ENCODE measurements at regions of chr5 and their contacts with region 1.

Region 1: GRCh38 chr5:65925601-65926275 is 637 bp upstream of the ERBIN start:
- DNase-seq: peak; percentile 84 to 85
- H3K4me3 ChIP-seq: peak overlapping the region; percentile 65 to 91 (median 86)
- H3K27ac ChIP-seq: peak overlapping the region; percentile 98 to 100 (median 99)
- H3K4me1 ChIP-seq: peaks cover 0 to 10% of the 10 kb centered on the region in 2 donors
- H3K27me3 ChIP-seq: no peaks in the 10 kb centered on the region
- CTCF ChIP-seq: peak in 2 of 6 experiments; percentile 37 to 42
- POLR2A ChIP-seq: peak; percentile 68 to 93

Region 2: DNA sequence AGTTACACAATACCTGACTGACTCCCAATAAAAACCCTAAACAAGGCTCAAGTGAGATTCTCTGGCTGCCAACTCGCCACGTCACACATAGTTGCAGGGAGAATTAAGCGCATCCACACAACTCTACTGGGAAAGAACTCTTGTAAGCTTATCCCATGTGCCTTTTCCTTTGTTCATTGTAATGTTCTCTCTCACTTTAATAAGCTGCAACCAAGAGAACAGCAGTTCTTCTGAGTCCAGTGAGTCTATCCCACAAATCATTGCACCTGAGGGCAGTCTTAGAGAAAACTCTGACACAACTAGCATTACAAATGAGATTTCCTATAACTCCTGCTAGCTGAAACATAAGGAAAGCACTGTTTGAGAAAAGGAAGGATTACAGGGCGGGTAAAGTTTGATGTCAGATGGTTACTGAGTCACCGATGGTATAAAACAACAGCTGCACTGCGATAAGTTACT is 390.2 kb before region 1 on chr5:
- intact Hi-C with region 1: no loop called
- DNase-seq: no peak
- H3K4me3 ChIP-seq: no peak overlapping the region
- H3K27ac ChIP-seq: no peak overlapping the region
- H3K4me1 ChIP-seq: no peaks in the 10 kb centered on the region
- H3K27me3 ChIP-seq: no peaks in the 10 kb centered on the region
- CTCF ChIP-seq: no peak
- POLR2A ChIP-seq: no peak

Region 3: DNA sequence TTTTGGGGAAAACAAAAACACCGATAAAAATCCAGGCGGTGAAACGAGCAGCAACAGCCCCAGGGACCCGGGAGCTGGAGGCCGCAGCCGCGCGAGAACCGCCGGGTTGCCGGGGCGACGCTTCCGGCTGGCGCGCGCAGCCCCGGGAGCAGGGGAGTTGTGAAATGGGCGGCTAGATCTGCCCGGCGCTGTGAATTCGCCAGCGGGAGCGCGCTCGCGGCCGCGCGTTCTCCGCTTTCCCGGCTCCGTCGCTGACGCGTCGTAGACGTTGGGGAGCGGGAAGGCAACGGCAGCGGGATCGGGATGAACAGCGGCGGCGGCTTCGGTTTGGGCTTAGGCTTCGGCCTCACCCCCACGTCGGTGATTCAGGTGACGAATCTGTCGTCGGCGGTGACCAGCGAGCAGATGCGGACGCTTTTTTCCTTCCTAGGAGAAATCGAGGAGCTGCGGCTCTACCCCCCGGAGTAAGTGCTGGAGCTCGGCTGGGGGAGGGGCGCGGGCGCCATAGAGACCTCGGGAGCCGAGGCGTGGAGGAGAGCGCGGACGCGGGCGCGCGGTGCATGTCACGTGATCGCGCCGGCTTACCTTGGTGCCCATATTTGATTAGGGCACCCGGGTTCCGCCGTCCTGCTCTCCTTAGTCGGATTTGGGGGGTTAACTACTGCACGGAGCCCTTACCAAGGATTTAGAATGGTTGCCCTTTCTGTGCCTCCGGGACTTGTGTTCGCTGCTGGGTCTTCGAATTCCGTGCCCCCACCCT is 218.5 kb after region 1 on chr5 and contains the start of gene SREK1:
- intact Hi-C with region 1: loop called (anchors 5 kb)
- DNase-seq: peak; percentile 95 to 97
- H3K4me3 ChIP-seq: peak within 1 kb of the TSS; percentile 13 to 74 (median 54)
- H3K27ac ChIP-seq: peak within 1 kb of the TSS; percentile 98 to 99 (median 99)
- H3K4me1 ChIP-seq: peaks cover 17 to 28% of the 10 kb centered on the region in 2 donors
- H3K27me3 ChIP-seq: no peaks in the 10 kb centered on the region
- CTCF ChIP-seq: peak in 1 of 6 experiments; percentile 17
- POLR2A ChIP-seq: peak; percentile 56 to 89
- total RNA-seq, gene SREK1: 124 to 236 (median 192) TPM

Region 4: DNA sequence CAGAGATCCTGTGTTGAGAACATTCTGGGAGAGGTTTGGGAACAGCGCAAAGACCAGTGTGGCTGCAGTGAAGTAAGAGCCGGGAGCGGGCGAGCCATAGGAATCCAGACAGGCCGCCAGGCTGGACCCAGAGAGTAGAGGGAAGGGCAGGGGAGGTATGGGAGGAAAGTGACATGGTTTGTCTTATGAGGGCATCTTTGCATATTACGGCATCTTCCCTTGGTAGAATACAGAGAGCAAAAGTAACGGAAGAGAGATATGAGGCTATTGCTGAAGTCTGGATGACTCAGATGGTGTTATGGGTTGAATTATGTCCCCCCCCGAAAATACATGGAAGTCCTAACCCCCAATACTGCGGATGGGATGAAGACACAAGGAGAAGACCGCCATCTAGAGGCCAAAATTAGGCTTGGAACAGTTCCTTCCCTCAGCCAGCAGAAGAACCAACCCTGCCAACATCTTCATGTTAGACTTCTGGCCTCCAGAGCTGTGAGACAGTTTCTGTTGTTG is 938.6 kb after region 1 on chr5:
- intact Hi-C with region 1: no loop called
- DNase-seq: no peak
- H3K4me3 ChIP-seq: no peak overlapping the region
- H3K27ac ChIP-seq: no peak overlapping the region
- H3K4me1 ChIP-seq: peaks cover 4 to 15% of the 10 kb centered on the region in 2 donors
- H3K27me3 ChIP-seq: no peaks in the 10 kb centered on the region
- CTCF ChIP-seq: peak in 3 of 6 experiments; percentile 31 to 57 (median 46)
- POLR2A ChIP-seq: no peak

Measured in thyroid gland (tissue), 4 donors.